ENCODE measurements at regions of chr7 and their contacts with region 1.

Region 1: GRCh38 chr7:9498303-9498702 is 1064.9 kb downstream of the NXPH1 start:
- DNase-seq: no peak
- ATAC-seq: no peak
- H3K4me3 ChIP-seq: no peak overlapping the region
- H3K27ac ChIP-seq: no peak overlapping the region
- H3K4me1 ChIP-seq: no peaks in the 10 kb centered on the region
- H3K27me3 ChIP-seq: no peaks in the 10 kb centered on the region
- CTCF ChIP-seq: no peak

Region 2: GRCh38 chr7:9516662-9517061 is 18.4 kb after region 1 on chr7:
- CTCF ChIA-PET with region 1: no interaction called
- POLR2A ChIA-PET with region 1: no interaction called
- in situ Hi-C with region 1: no loop called
- intact Hi-C with region 1: loop called (anchors 2 kb)
- DNase-seq: no peak
- ATAC-seq: no peak
- H3K4me3 ChIP-seq: no peak overlapping the region
- H3K27ac ChIP-seq: no peak overlapping the region
- H3K4me1 ChIP-seq: no peaks in the 10 kb centered on the region
- H3K27me3 ChIP-seq: no peaks in the 10 kb centered on the region
- CTCF ChIP-seq: no peak